Dorsolateral prefrontal cortex (tissue), 120 donors: ENCODE measurements at regions of chr11 and their contacts with region 1.

Region 1: GRCh38 chr11:33015621-33016551 is at the start of gene DEPDC7:
- DNase-seq: peak; percentile 54 to 94 (median 90)
- H3K4me3 ChIP-seq: peak within 1 kb of the TSS; percentile 40 to 86 (median 69)
- H3K27ac ChIP-seq: peak within 1 kb of the TSS in 41 of 59 donors; percentile 0 to 78 (median 61)
- H3K27me3 ChIP-seq: peaks cover 0 to 4% (median 0%) of the 10 kb centered on the region in 45 donors
- CTCF ChIP-seq: peak in 1 of 56 donors; percentile 5
- total RNA-seq, gene DEPDC7: 0.35 to 9.8 (median 2.9) TPM

Region 2: DNA sequence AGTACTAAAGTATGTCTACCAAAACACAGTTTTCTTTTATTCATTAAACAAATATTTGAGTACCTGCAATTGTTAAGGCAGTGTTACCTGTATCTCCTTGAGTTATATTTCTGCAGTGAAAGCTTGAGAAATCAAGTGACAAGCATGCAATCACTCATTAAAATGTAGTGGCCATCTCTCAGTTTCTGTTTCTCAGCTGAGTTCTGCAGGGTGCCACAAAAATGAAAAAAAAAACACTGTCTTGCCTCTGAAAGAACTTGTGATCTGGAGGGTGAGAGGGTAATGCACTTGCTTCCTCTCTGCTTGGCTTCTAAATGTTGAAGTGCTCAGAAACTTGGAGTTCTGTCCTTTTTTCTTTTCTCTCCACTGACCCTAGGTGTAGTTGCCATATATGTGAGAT is 116.4 kb before region 1 on chr11:
- intact Hi-C with region 1: loop called in 1 of 2 experiments (anchors 5 kb)
- DNase-seq: no peak
- H3K4me3 ChIP-seq: no peak overlapping the region
- H3K27ac ChIP-seq: no peak overlapping the region
- H3K27me3 ChIP-seq: no peaks in the 10 kb centered on the region
- CTCF ChIP-seq: no peak

Region 3: GRCh38 chr11:32911413-32911812 is 104.5 kb before region 1 on chr11:
- intact Hi-C with region 1: no loop called
- DNase-seq: no peak
- H3K4me3 ChIP-seq: no peak overlapping the region
- H3K27ac ChIP-seq: no peak overlapping the region
- H3K27me3 ChIP-seq: no peaks in the 10 kb centered on the region
- CTCF ChIP-seq: no peak

Region 4: GRCh38 chr11:33207408-33207985 is 191.6 kb after region 1 on chr11:
- intact Hi-C with region 1: no loop called
- DNase-seq: no peak
- H3K4me3 ChIP-seq: no peak overlapping the region
- H3K27ac ChIP-seq: no peak overlapping the region
- H3K27me3 ChIP-seq: no peaks in the 10 kb centered on the region
- CTCF ChIP-seq: no peak